GM12878 (cell line): ENCODE measurements at regions of chr9 and their contacts with region 1.

Region 1: DNA sequence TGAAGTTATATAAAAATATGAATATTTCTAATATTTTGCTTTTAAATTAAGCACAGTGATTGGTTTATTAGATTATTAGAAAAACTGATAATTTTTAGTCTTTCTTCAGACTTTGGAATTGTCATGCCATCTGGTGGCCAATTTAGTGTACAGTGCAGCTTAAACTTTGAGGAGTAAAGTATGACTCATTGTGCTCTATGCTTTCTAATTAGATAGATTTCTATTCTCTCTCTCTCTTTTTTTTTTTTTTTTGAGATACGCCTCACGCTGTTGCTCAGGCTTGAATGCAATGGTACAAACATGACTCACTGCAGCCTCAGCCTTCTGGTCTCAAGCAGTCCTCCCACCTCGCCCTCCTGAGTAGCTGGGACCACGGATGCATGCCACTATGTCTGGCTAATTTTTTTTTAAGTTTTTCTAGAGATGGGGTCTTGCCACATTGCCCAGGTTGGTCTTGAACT is 42.1 kb upstream of the GPR21 start:
- DNase-seq: peak; percentile 23
- ATAC-seq: peak; percentile 84
- H3K4me3 ChIP-seq: no peak overlapping the region
- H3K27ac ChIP-seq: no peak overlapping the region
- H3K4me1 ChIP-seq: no peaks in the 10 kb centered on the region
- H3K27me3 ChIP-seq: no peaks in the 10 kb centered on the region
- CTCF ChIP-seq: peak; percentile 57 to 64 (median 60)
- EP300 ChIP-seq: no peak
- POLR2A ChIP-seq: no peak
- RAD21 ChIP-seq: peak; percentile 76

Region 2: GRCh38 chr9:122827761-122828093 is 163.7 kb before region 1 on chr9:
- CTCF ChIA-PET with region 1: interaction called, 10 read pairs
- POLR2A ChIA-PET with region 1: interaction called, 3 read pairs
- RAD21 ChIA-PET with region 1: interaction called, 4 read pairs
- SMC1A ChIA-PET with region 1: interaction called, 5 read pairs
- in situ Hi-C with region 1: no loop called
- intact Hi-C with region 1: no loop called
- DNase-seq: no peak
- ATAC-seq: peak; percentile 18
- H3K4me3 ChIP-seq: peak overlapping the region; percentile 100
- H3K27ac ChIP-seq: peak overlapping the region; percentile 96
- H3K4me1 ChIP-seq: no peaks in the 10 kb centered on the region
- H3K27me3 ChIP-seq: no peaks in the 10 kb centered on the region
- CTCF ChIP-seq: no peak
- EP300 ChIP-seq: no peak
- POLR2A ChIP-seq: no peak
- RAD21 ChIP-seq: no peak

Region 3: DNA sequence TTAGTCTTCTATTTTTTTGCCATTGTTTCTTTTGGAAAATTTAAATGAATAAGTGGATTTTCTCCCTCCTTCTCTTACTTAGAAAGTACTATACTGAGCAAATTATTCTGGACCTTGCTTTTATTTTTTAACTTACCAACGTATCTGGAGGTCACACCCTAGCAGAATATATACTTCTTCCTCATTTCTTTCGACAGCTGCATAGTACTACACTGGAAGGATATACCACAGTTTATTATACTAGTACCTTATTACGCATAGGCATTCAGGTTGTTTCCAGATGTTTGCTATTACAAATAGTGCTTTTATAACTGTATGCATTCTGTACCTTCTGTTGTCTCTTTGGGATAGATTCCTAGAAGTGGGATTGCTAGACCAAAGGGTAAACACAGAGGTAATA is 102.9 kb before region 1 on chr9:
- CTCF ChIA-PET with region 1: interaction called, 13 read pairs
- POLR2A ChIA-PET with region 1: no interaction called
- RAD21 ChIA-PET with region 1: interaction called, 3 read pairs
- SMC1A ChIA-PET with region 1: interaction called, 5 read pairs
- in situ Hi-C with region 1: no loop called
- intact Hi-C with region 1: no loop called
- DNase-seq: no peak
- ATAC-seq: no peak
- H3K4me3 ChIP-seq: no peak overlapping the region
- H3K27ac ChIP-seq: no peak overlapping the region
- H3K4me1 ChIP-seq: no peaks in the 10 kb centered on the region
- H3K27me3 ChIP-seq: no peaks in the 10 kb centered on the region
- CTCF ChIP-seq: no peak
- EP300 ChIP-seq: no peak
- POLR2A ChIP-seq: no peak
- RAD21 ChIP-seq: no peak

Region 4: GRCh38 chr9:122912964-122913673 is 78.3 kb before region 1 on chr9 and contains the start of gene ZBTB6:
- CTCF ChIA-PET with region 1: interaction called, 17 read pairs
- POLR2A ChIA-PET with region 1: interaction called, 7 read pairs
- RAD21 ChIA-PET with region 1: interaction called, 22 read pairs
- SMC1A ChIA-PET with region 1: interaction called, 15 read pairs
- in situ Hi-C with region 1: no loop called
- intact Hi-C with region 1: loop called (anchors 5 kb)
- DNase-seq: peak; percentile 84
- ATAC-seq: peak; percentile 98
- H3K4me3 ChIP-seq: peak within 1 kb of the TSS; percentile 78
- H3K27ac ChIP-seq: peak within 1 kb of the TSS; percentile 87
- H3K4me1 ChIP-seq: peaks cover 4% of the 10 kb centered on the region; the same call in 1 of the 2 replicates
- H3K27me3 ChIP-seq: no peaks in the 10 kb centered on the region
- CTCF ChIP-seq: no peak
- EP300 ChIP-seq: no peak
- POLR2A ChIP-seq: peak; percentile 92
- RAD21 ChIP-seq: peak; percentile 44; the same call in 1 of the 2 replicates
- polyA plus RNA-seq, gene ZBTB6: 1.7 to 3.0 TPM

Region 5: DNA sequence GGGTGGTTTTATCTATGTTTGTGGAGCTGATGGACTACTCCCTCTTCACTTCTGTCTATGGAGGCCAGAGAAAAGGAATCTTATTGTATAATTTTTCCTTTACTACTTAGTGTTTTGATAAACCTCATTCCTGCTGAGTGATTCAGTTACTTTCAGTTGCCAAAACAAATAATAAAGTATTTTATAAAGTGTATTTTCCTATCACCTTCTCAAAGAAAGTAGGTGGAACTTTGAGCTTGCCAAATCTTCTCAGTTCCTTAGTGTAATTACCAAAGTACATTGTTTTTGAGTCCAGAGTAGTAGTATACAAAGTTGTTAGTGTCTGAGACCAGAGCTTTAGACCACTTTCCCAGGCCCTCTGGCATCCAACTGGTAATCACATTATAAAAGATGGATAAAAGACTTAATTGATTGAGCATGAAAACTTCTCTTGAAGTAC is 37.1 kb before region 1 on chr9:
- CTCF ChIA-PET with region 1: interaction called, 10 read pairs
- POLR2A ChIA-PET with region 1: no interaction called
- RAD21 ChIA-PET with region 1: interaction called, 5 read pairs
- SMC1A ChIA-PET with region 1: interaction called, 3 read pairs
- in situ Hi-C with region 1: no loop called
- intact Hi-C with region 1: no loop called
- DNase-seq: no peak
- ATAC-seq: no peak
- H3K4me3 ChIP-seq: no peak overlapping the region
- H3K27ac ChIP-seq: no peak overlapping the region
- H3K4me1 ChIP-seq: peaks cover 5% of the 10 kb centered on the region; the same call in 1 of the 2 replicates
- H3K27me3 ChIP-seq: no peaks in the 10 kb centered on the region
- CTCF ChIP-seq: no peak
- EP300 ChIP-seq: no peak
- POLR2A ChIP-seq: no peak
- RAD21 ChIP-seq: no peak

Region 6: GRCh38 chr9:123036893-123037545 is 45.6 kb after region 1 on chr9:
- CTCF ChIA-PET with region 1: no interaction called
- POLR2A ChIA-PET with region 1: no interaction called
- RAD21 ChIA-PET with region 1: no interaction called
- SMC1A ChIA-PET with region 1: no interaction called
- in situ Hi-C with region 1: no loop called
- intact Hi-C with region 1: no loop called
- DNase-seq: no peak
- ATAC-seq: no peak
- H3K4me3 ChIP-seq: no peak overlapping the region
- H3K27ac ChIP-seq: no peak overlapping the region
- H3K4me1 ChIP-seq: no peaks in the 10 kb centered on the region
- H3K27me3 ChIP-seq: no peaks in the 10 kb centered on the region
- CTCF ChIP-seq: no peak
- EP300 ChIP-seq: no peak
- POLR2A ChIP-seq: no peak
- RAD21 ChIP-seq: no peak

Region 7: DNA sequence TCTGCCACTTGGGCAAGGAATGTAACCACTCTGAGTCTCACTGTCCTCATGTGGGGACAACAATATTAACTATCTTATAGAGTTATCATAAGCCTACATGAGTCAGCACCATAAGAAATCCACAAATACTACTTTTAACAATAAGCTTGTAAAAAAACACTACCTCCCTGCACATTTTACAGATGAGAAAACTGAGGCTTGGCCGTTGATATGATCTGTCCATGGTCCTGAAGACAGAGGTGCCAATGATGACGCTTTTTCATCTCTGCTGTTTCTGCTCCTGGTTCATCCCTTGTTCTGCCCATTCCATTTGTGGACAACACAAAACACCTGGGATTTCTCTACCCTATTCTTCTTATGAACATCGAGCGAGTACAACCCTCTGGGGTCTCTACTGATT is 300.3 kb after region 1 on chr9:
- CTCF ChIA-PET with region 1: no interaction called
- POLR2A ChIA-PET with region 1: no interaction called
- RAD21 ChIA-PET with region 1: no interaction called
- SMC1A ChIA-PET with region 1: no interaction called
- in situ Hi-C with region 1: no loop called
- intact Hi-C with region 1: no loop called
- DNase-seq: no peak
- ATAC-seq: no peak
- H3K4me3 ChIP-seq: no peak overlapping the region
- H3K27ac ChIP-seq: no peak overlapping the region
- H3K4me1 ChIP-seq: no peaks in the 10 kb centered on the region
- H3K27me3 ChIP-seq: no peaks in the 10 kb centered on the region
- CTCF ChIP-seq: no peak
- EP300 ChIP-seq: no peak
- POLR2A ChIP-seq: no peak
- RAD21 ChIP-seq: no peak